GM12878 (cell line): ENCODE measurements at regions of chr15 and their contacts with region 1.

Region 1: DNA sequence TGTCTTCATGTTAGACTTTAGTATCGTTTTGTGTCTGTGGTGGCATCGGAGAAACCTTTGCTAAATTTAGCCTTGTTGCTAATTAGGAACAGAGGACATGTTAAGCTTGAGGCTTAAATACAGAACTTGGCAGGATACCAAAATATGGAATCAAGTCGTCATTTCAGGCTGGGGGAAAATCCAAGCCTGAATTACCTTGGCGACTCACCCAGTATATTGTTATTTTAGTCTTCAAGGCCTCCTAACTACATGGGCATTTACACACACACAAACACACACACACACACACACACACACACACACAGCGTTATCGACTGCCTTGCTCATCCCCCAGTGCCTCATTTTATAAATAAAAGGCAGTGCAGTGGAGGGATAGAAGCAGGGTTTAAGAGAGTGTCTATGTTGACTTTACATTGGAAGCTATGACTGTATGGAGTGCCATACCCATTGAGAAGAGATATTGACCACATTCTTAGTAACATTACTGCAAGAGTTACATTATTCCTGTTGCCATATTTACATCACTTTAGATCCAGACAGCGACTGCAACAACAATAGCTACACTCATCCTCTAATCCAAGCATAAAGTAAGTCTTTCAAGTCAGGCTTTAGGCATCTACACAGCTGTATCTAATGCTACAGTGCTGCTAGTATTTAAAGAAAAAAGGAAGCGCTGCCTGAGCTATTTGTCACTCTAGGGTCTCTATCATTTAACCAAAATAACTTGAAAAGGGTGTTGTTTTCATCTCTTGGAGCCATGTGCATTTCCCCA is 210.8 kb upstream of the SEMA6D start:
- DNase-seq: no peak
- ATAC-seq: no peak
- H3K4me3 ChIP-seq: no peak overlapping the region
- H3K27ac ChIP-seq: no peak overlapping the region
- H3K4me1 ChIP-seq: no peaks in the 10 kb centered on the region
- H3K27me3 ChIP-seq: no peaks in the 10 kb centered on the region
- CTCF ChIP-seq: no peak
- EP300 ChIP-seq: no peak
- POLR2A ChIP-seq: no peak
- RAD21 ChIP-seq: no peak

Region 2: DNA sequence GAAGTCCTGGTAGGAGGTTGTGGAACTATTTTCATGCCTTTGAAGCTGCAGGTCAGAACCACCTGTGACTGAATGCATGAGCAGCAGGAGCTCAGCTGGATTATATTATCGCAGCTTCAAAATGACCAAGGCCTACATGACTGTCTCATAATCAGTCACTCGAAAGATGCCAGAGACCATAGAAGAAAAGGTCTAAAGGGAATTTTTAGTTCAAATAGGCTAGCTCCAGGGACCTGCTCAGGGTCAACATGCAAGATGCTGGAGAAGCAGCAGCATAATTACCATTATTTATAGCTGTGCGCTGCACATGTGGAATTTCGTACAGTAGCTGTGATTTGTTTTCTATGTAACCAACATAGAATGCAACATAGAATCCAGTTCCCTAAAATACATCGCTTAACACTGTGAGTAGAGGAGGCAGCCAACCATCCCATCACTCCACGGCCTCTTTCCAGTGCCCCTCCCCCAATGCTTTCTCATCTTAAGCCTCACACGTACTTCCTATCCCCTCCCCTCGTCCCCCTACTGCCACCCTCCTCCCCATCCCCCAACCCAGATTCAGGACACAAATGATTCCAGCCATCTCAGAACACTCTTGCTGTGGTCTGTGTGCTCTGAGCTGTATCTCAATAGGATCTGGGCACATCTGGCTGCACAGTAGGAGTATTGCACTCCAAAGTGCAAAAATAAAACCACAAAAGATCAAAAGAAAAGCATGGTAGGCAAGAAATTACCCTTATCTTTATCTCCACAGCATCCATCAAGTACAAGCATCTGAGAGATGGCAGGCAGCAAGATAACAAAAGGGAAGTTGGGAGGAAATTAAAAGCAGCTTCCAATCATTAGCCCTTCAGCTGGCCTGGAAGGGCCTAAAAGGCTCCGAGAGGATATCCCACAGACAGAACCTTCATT is 142.0 kb before region 1 on chr15:
- CTCF ChIA-PET with region 1: no interaction called
- POLR2A ChIA-PET with region 1: no interaction called
- RAD21 ChIA-PET with region 1: no interaction called
- SMC1A ChIA-PET with region 1: no interaction called
- in situ Hi-C with region 1: no loop called
- intact Hi-C with region 1: no loop called
- DNase-seq: no peak
- ATAC-seq: no peak
- H3K4me3 ChIP-seq: no peak overlapping the region
- H3K27ac ChIP-seq: no peak overlapping the region
- H3K4me1 ChIP-seq: no peaks in the 10 kb centered on the region
- H3K27me3 ChIP-seq: no peaks in the 10 kb centered on the region
- CTCF ChIP-seq: no peak
- EP300 ChIP-seq: no peak
- POLR2A ChIP-seq: no peak
- RAD21 ChIP-seq: no peak

Region 3: DNA sequence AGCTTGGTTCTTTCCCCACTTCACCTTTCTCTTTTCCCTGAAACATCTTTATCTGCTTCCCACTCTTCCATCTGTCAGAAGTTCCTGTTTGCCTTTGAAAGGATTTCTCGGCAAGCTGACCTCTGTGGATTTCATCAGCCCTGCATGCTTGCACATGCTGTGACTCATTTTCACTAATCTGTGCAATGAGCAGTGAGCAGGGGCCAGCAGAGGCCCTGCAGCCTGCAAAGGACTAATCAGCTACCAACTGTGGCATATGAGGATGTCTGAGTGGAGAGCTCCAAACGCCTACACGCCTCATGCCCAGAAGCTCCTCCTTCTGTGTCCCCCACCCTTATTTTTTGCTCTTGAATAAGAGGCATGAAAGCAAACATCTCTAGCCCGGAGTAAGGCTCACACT is 122.2 kb before region 1 on chr15:
- CTCF ChIA-PET with region 1: no interaction called
- POLR2A ChIA-PET with region 1: no interaction called
- RAD21 ChIA-PET with region 1: no interaction called
- SMC1A ChIA-PET with region 1: no interaction called
- in situ Hi-C with region 1: no loop called
- intact Hi-C with region 1: no loop called
- DNase-seq: no peak
- ATAC-seq: no peak
- H3K4me3 ChIP-seq: no peak overlapping the region
- H3K27ac ChIP-seq: no peak overlapping the region
- H3K4me1 ChIP-seq: no peaks in the 10 kb centered on the region
- H3K27me3 ChIP-seq: no peaks in the 10 kb centered on the region
- CTCF ChIP-seq: no peak
- EP300 ChIP-seq: no peak
- POLR2A ChIP-seq: no peak
- RAD21 ChIP-seq: no peak

Region 4: GRCh38 chr15:47565949-47566348 is 59.4 kb after region 1 on chr15:
- CTCF ChIA-PET with region 1: no interaction called
- POLR2A ChIA-PET with region 1: no interaction called
- RAD21 ChIA-PET with region 1: no interaction called
- SMC1A ChIA-PET with region 1: no interaction called
- in situ Hi-C with region 1: loop called (anchors 10 kb)
- intact Hi-C with region 1: no loop called
- DNase-seq: no peak
- ATAC-seq: no peak
- H3K4me3 ChIP-seq: no peak overlapping the region
- H3K27ac ChIP-seq: no peak overlapping the region
- H3K4me1 ChIP-seq: no peaks in the 10 kb centered on the region
- H3K27me3 ChIP-seq: no peaks in the 10 kb centered on the region
- CTCF ChIP-seq: no peak
- EP300 ChIP-seq: no peak
- POLR2A ChIP-seq: no peak
- RAD21 ChIP-seq: no peak